ENCODE measurements at regions of chr17 and their contacts with region 1.

Region 1: DNA sequence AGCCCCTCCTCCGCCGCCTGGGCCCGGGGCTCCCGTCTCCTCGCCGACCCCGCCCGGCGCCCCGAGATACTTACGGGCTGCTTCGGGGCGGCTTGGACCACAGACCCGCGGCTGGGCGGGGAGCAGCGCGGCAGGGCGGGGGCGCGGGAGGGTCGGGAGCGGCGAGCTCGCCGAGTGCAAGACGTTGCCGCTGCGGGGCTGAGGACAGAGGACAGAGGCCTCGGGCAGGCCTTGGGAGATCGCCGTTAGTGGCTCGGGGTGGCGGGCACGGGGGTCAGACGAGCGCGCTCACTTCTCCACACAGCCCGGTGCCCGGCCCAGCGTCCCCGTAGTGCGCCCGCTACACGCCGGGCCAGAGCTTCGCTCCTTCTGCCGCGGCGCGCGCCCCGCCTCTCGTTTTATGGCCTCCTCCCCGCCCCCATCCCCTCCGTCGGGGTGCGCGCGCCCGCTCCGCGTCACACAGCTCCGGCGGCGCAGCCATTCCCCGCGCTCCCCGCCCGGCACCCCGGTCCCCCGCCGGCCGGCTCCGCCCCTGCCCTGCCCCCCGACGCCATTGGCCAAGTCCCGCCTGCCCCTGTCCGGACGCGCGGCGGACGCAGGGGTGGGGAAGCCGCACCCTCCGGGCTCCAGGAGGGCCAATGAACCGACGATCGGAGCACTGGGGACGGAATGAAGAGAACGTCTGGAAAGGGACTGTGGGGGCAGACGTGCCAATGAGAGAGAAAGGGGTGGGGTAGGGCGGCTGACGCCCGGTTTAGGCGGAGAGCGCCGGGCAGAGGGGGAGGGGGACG is at the start of gene TOB1:
- DNase-seq: peak; percentile 83
- H3K4me3 ChIP-seq: peak within 1 kb of the TSS; percentile 94
- H3K27ac ChIP-seq: peak within 1 kb of the TSS; percentile 95
- H3K27me3 ChIP-seq: no peaks in the 10 kb centered on the region
- CTCF ChIP-seq: no peak
- polyA plus RNA-seq, gene TOB1: 18.3 and 20.3 TPM in 2 replicates

Region 2: GRCh38 chr17:49624896-49625295 is 1241.3 kb before region 1 on chr17:
- CTCF ChIA-PET with region 1: no interaction called
- POLR2A ChIA-PET with region 1: no interaction called
- DNase-seq: no peak
- H3K4me3 ChIP-seq: no peak overlapping the region
- H3K27ac ChIP-seq: no peak overlapping the region
- H3K27me3 ChIP-seq: no peaks in the 10 kb centered on the region
- CTCF ChIP-seq: no peak

Region 3: GRCh38 chr17:50853015-50853615 is 13.1 kb before region 1 on chr17:
- CTCF ChIA-PET with region 1: interaction called, 49 read pairs
- POLR2A ChIA-PET with region 1: interaction called, 79 read pairs
- DNase-seq: no peak
- H3K4me3 ChIP-seq: no peak overlapping the region
- H3K27ac ChIP-seq: no peak overlapping the region
- H3K27me3 ChIP-seq: peaks cover 2% of the 10 kb centered on the region
- CTCF ChIP-seq: no peak

Region 4: GRCh38 chr17:50904521-50905459 is 38.6 kb after region 1 on chr17:
- CTCF ChIA-PET with region 1: interaction called, 3 read pairs
- POLR2A ChIA-PET with region 1: interaction called, 55 read pairs
- DNase-seq: no peak
- H3K4me3 ChIP-seq: no peak overlapping the region
- H3K27ac ChIP-seq: peak overlapping the region; percentile 98
- H3K27me3 ChIP-seq: peaks cover 8% of the 10 kb centered on the region
- CTCF ChIP-seq: no peak

Region 5: GRCh38 chr17:50931144-50931908 is 65.1 kb after region 1 on chr17:
- CTCF ChIA-PET with region 1: interaction called, 3 read pairs
- POLR2A ChIA-PET with region 1: interaction called, 52 read pairs
- DNase-seq: peak; percentile 55
- H3K4me3 ChIP-seq: peak overlapping the region; percentile 50
- H3K27ac ChIP-seq: peak overlapping the region; percentile 90
- H3K27me3 ChIP-seq: no peaks in the 10 kb centered on the region
- CTCF ChIP-seq: no peak

Region 6: DNA sequence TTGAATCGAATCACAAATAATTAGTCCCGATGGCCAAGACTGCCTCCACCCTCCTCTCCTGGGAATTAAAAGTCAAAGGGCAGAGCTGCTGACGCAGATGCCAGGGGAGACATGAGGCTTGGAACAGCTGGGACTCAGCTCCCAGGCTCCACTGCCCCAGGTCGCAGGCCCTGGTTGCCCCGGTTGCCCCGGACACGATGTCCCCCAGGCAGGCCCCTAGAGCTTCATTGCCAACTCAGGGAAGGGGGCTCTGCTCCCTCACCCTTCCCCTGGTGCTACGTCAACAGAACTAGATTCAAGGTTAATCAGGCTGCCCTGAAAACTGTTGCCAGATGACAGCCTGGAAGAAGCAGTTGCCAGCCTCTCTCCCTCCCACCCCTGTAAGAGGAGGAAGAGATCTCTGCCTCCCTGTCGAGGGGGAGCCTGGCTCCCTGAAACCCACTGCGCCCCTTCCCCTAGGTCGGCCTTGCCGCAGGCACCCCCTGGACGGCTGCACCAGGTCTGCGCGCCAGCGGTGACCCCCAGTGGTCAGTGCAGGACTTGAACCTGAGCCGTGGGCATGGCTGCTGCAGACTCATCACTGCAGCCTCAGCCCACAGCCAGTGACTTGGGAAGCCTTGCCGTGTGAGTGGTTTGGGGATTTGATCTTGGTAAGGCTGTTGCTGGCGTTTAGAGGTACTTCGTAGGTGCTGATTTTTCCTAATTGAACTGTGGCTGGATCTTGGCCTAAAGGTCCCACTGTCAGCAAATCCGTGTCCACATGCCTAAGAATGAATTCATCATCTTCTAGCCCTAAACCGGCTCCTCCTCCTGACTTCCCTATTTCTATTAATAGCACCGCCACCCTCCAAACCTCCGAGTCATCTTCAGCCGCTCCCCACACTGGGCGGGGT is 84.1 kb after region 1 on chr17:
- CTCF ChIA-PET with region 1: interaction called, 19 read pairs
- POLR2A ChIA-PET with region 1: interaction called, 85 read pairs
- DNase-seq: peak; percentile 37
- H3K4me3 ChIP-seq: no peak overlapping the region
- H3K27ac ChIP-seq: peak overlapping the region; percentile 80
- H3K27me3 ChIP-seq: no peaks in the 10 kb centered on the region
- CTCF ChIP-seq: peak; percentile 68

Region 7: DNA sequence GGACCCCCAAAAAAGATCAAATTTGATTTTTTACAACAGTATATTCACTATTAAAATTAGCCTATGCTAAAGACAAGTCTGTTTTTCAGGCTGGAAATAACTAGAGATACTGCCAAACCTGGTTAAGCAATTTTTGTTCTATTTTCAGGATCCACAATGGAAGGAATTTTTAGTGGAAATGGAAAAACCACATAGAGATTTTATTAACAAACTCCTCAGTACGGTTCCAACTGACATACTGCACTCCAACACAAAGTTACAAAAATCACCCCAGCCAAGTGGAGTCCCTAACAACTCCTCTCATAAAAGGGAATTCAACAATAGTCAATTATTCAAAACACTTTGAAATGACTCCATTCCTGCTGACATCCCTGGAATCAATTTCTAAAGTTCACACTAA is 101.6 kb after region 1 on chr17:
- CTCF ChIA-PET with region 1: interaction called, 14 read pairs
- POLR2A ChIA-PET with region 1: interaction called, 10 read pairs
- DNase-seq: no peak
- H3K4me3 ChIP-seq: no peak overlapping the region
- H3K27ac ChIP-seq: no peak overlapping the region
- H3K27me3 ChIP-seq: no peaks in the 10 kb centered on the region
- CTCF ChIP-seq: no peak

Measured in AG04450 (cell line).